ENCODE measurements at regions of chr1 and their contacts with region 1.

Region 1: DNA sequence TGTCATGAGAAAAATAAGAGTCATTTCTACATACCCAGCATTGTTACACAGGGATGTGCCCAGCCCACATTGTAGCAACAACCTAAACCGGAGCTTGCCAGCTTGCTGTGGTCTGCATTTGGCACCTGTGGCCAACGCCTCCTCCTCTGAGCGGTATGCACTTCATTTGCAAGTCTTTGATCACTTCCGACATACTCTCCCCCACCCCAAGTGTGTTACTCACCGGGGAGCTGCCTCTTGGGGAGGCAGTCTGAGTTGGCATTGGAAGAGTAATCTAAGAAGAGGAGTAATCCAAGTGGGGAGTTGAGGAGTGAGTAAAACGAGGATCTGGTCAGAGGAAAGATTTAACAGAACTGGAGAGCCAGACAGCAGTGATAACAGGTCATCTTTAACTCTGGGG is 3.8 kb downstream of the BCL9 start:
- DNase-seq: peak; percentile 63
- ATAC-seq: no peak
- H3K4me3 ChIP-seq: no peak overlapping the region
- H3K27ac ChIP-seq: no peak overlapping the region
- H3K4me1 ChIP-seq: peaks cover 6% of the 10 kb centered on the region
- H3K27me3 ChIP-seq: no peaks in the 10 kb centered on the region
- CTCF ChIP-seq: no peak
- POLR2A ChIP-seq: no peak
- RAD21 ChIP-seq: no peak

Region 2: DNA sequence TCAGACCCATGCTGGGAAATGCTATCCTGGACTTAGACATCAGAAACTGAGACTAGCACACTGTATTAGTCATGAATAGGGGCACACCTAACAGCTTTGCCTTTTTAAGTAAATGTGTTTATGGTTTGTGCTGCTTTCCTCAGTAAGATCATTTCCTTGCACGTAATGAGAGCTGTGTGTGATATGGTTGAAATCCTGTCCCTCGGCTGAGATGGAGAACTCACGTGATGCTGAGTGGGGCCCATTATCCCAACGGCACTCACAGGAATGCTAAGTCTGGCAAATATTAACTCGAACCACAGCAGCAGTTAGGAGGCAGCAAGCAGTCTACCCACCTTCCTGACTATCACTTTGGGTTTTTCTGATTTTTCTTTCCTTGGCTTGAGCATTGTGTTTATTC is 34.4 kb after region 1 on chr1:
- CTCF ChIA-PET with region 1: no interaction called
- POLR2A ChIA-PET with region 1: no interaction called
- dilution Hi-C with region 1: no loop called
- in situ Hi-C with region 1: no loop called
- intact Hi-C with region 1: loop called (anchors 1 kb)
- DNase-seq: peak; percentile 80
- ATAC-seq: peak; percentile 91
- H3K4me3 ChIP-seq: no peak overlapping the region; the same call in 1 of the 2 replicates
- H3K27ac ChIP-seq: peak overlapping the region; percentile 67; the same call in 1 of the 2 replicates
- H3K4me1 ChIP-seq: peaks cover 6% of the 10 kb centered on the region
- H3K27me3 ChIP-seq: 0 out of 2 replicates have a peak, but pooled peaks cover 1% of the 10 kb centered on the region
- CTCF ChIP-seq: no peak
- POLR2A ChIP-seq: no peak
- RAD21 ChIP-seq: no peak

Region 3: GRCh38 chr1:147591261-147591891 is 46.2 kb after region 1 on chr1:
- CTCF ChIA-PET with region 1: no interaction called
- POLR2A ChIA-PET with region 1: no interaction called
- dilution Hi-C with region 1: no loop called
- in situ Hi-C with region 1: loop called (anchors 5 kb)
- intact Hi-C with region 1: no loop called
- DNase-seq: no peak
- ATAC-seq: no peak
- H3K4me3 ChIP-seq: no peak overlapping the region
- H3K27ac ChIP-seq: no peak overlapping the region
- H3K4me1 ChIP-seq: no peaks in the 10 kb centered on the region; the same call in 1 of the 2 replicates
- H3K27me3 ChIP-seq: no peaks in the 10 kb centered on the region
- CTCF ChIP-seq: no peak
- POLR2A ChIP-seq: no peak
- RAD21 ChIP-seq: no peak

Region 4: GRCh38 chr1:147599362-147600118 is 54.4 kb after region 1 on chr1:
- CTCF ChIA-PET with region 1: no interaction called
- POLR2A ChIA-PET with region 1: interaction called, 5 read pairs
- dilution Hi-C with region 1: no loop called
- in situ Hi-C with region 1: loop called (anchors 5 kb)
- intact Hi-C with region 1: loop called (anchors 1 kb)
- DNase-seq: peak; percentile 95
- ATAC-seq: peak; percentile 90
- H3K4me3 ChIP-seq: peak overlapping the region; percentile 59
- H3K27ac ChIP-seq: peak overlapping the region; percentile 81
- H3K4me1 ChIP-seq: peaks cover 4% of the 10 kb centered on the region
- H3K27me3 ChIP-seq: no peaks in the 10 kb centered on the region
- CTCF ChIP-seq: no peak
- POLR2A ChIP-seq: peak; percentile 44; the same call in 1 of the 2 replicates
- RAD21 ChIP-seq: no peak